GM13976 (cell line): ENCODE measurements at regions of chr10 and their contacts with region 1.

Region 1: GRCh38 chr10:96319754-96320474 is 15.7 kb downstream of the DNTT start:
- DNase-seq: no peak
- CTCF ChIP-seq: no peak

Region 2: GRCh38 chr10:96025566-96025965 is 294.3 kb before region 1 on chr10:
- in situ Hi-C with region 1: loop called (anchors 10 kb)
- DNase-seq: no peak
- CTCF ChIP-seq: peak; percentile 7